B cell (primary cell): ENCODE measurements at regions of chr12 and their contacts with region 1.

Region 1: DNA sequence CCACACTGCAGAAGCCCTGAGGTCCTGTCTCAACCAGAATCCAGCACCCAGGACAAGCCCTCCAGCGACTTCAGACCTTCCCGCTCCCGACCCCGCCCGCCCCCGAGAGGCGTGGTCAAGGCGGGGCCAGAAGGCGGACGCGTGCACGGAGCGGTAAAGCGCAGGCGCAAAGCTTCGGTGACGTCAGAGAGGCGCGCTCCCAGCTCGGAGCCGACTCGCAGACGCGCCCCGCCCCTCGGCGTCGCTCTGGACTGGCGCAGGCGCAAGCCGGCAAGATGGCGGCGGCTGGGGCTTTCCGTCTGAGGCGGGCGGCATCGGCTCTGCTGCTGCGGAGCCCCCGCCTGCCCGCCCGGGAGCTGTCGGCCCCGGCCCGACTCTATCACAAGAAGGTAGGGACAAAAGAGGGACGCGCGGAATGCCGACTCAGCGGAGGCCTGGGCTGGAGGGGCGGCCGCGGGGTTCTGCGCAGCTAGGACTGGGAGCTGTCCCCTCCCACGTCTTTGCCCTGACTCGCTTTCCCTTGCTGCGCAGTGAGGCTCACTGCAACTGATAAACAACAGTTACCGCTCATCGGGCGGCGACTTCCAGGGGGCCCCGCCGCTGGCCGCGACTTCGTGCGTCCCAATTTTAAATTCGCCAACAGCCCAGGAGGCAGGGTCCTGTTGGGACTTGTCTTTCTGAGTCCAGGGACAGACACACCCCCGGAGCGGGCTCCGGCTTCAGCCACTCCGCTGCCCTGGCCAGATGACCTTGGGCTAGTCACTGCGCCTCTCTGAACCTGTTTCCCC is at the start of gene ISCU:
- DNase-seq: peak; percentile 99
- ATAC-seq: peak; percentile 73
- H3K4me3 ChIP-seq: peak within 1 kb of the TSS; percentile 84 to 99 (median 98)
- H3K4me3 Mint-ChIP-seq: peak within 1 kb of the TSS; percentile 100
- H3K27ac ChIP-seq: peak within 1 kb of the TSS; percentile 94 to 97
- H3K27ac Mint-ChIP-seq: peak within 1 kb of the TSS; percentile 100
- H3K4me1 ChIP-seq: peaks cover 53 to 61% of the 10 kb centered on the region in 2 donors
- H3K4me1 Mint-ChIP-seq: peaks cover 72% of the 10 kb centered on the region
- H3K27me3 ChIP-seq: no peaks in the 10 kb centered on the region
- H3K27me3 Mint-ChIP-seq: no peaks in the 10 kb centered on the region
- CTCF ChIP-seq: no peak
- total RNA-seq, gene ISCU: 190 and 209 TPM in 2 replicates

Region 2: DNA sequence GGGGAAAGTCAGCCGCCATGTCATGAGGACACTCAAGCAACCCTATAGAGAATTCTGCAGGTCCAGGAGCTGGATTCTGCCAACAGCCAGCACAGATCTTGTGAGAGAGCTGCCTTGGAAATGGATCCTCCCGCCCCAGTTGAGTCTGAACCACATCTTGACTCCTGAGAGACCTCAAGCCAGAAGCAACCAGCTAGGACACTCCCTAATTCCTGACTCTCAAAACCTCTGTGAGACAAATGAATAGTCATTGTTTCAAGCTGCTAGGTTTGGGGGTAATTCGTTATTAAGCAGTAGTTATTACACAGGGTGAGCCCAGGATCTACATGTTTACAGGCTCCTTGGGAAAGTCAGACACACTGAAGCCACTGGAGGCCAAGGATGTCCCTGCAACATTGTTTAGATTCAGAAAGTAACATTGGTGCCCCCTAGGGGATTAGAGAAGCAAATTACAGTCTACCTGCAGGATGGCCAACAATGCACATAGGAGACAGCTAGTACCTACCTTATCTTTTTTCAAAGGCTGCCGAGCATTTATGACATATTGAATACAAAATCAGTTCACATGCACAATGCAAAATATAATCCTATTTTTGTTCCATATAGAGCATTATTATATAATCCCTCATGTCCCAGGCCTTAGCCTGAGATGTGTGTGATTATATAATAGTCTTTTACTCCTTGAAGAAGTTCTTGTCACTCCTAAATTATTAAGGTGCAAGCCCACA is 105.4 kb before region 1 on chr12:
- CTCF ChIA-PET with region 1: no interaction called
- POLR2A ChIA-PET with region 1: no interaction called
- intact Hi-C with region 1: no loop called
- DNase-seq: peak; percentile 32
- ATAC-seq: no peak
- H3K4me3 ChIP-seq: no peak overlapping the region
- H3K4me3 Mint-ChIP-seq: no peak overlapping the region
- H3K27ac ChIP-seq: no peak overlapping the region
- H3K27ac Mint-ChIP-seq: no peak overlapping the region
- H3K4me1 ChIP-seq: no peaks in the 10 kb centered on the region
- H3K4me1 Mint-ChIP-seq: no peaks in the 10 kb centered on the region
- H3K27me3 ChIP-seq: peaks cover 0 to 20% (median 2%) of the 10 kb centered on the region in 4 experiments
- H3K27me3 Mint-ChIP-seq: peaks cover 40% of the 10 kb centered on the region
- CTCF ChIP-seq: peak; percentile 57

Region 3: GRCh38 chr12:108542320-108542719 is 20.2 kb before region 1 on chr12:
- CTCF ChIA-PET with region 1: no interaction called
- POLR2A ChIA-PET with region 1: no interaction called
- intact Hi-C with region 1: loop called (anchors 1 kb)
- DNase-seq: no peak
- ATAC-seq: no peak
- H3K4me3 ChIP-seq: no peak overlapping the region
- H3K4me3 Mint-ChIP-seq: peak overlapping the region; percentile 29
- H3K27ac ChIP-seq: peak overlapping the region in 1 of 2 donors; percentile 29
- H3K27ac Mint-ChIP-seq: peak overlapping the region; percentile 74
- H3K4me1 ChIP-seq: peaks cover 0 to 16% of the 10 kb centered on the region in 2 donors
- H3K4me1 Mint-ChIP-seq: peaks cover 19% of the 10 kb centered on the region
- H3K27me3 ChIP-seq: no peaks in the 10 kb centered on the region
- H3K27me3 Mint-ChIP-seq: no peaks in the 10 kb centered on the region
- CTCF ChIP-seq: no peak

Region 4: GRCh38 chr12:108633534-108634248 is 71.1 kb after region 1 on chr12 and contains the start of gene SELPLG:
- CTCF ChIA-PET with region 1: interaction called, 200 read pairs
- POLR2A ChIA-PET with region 1: interaction called, 51 read pairs
- intact Hi-C with region 1: loop called (anchors 1 kb)
- DNase-seq: peak; percentile 98
- ATAC-seq: peak; percentile 75
- H3K4me3 ChIP-seq: peak within 1 kb of the TSS; percentile 62 to 87 (median 78)
- H3K4me3 Mint-ChIP-seq: peak within 1 kb of the TSS; percentile 99
- H3K27ac ChIP-seq: peak within 1 kb of the TSS; percentile 92 to 95
- H3K27ac Mint-ChIP-seq: peak within 1 kb of the TSS; percentile 100
- H3K4me1 ChIP-seq: peaks cover 78 to 88% of the 10 kb centered on the region in 2 donors
- H3K4me1 Mint-ChIP-seq: peaks cover 89% of the 10 kb centered on the region
- H3K27me3 ChIP-seq: no peaks in the 10 kb centered on the region
- H3K27me3 Mint-ChIP-seq: no peaks in the 10 kb centered on the region
- CTCF ChIP-seq: peak; percentile 41
- total RNA-seq, gene SELPLG: 6.1 and 6.2 TPM in 2 replicates

Region 5: DNA sequence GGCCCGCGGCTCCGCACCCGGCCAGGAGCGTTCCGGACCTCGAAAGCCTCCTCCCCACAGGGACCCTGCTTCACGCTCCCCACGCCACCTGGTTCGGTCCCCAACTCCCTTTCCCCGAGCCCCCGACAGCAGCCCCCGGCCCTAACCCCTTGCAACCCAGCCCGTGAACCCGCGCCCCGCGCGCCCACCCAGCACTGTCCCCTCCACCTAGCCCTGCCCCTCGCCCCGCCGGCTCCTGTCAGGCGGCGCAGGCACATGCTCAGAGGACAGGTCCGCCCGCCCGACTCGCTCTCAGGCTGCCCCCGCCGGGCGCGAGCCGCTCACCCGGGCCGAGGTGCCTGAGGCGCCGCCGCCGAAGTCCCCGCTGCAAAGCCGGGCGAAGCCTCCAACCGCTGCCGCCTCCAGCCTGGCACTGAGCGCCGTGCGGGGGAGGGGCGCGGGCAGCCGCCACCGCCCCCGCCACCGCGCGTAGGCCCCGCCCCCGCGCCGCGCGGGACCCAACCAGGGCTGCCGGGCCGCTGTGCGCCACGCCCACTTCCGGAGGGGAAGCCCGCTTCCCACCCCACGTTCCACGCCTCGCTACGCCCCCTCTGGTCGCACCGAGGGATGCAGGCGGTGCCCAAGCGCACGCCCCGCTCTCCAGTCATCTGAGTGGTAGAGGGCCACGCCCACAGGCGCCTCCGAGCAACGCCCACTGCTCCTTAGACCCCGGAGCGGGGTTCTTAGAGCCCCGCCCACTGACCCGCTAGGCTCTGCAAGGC is 168.7 kb after region 1 on chr12 and contains the start of gene CORO1C:
- CTCF ChIA-PET with region 1: no interaction called
- POLR2A ChIA-PET with region 1: interaction called, 6 read pairs
- intact Hi-C with region 1: loop called (anchors 1 kb)
- DNase-seq: peak; percentile 97
- ATAC-seq: peak; percentile 73
- H3K4me3 ChIP-seq: peak within 1 kb of the TSS; percentile 70 to 92 (median 86)
- H3K4me3 Mint-ChIP-seq: peak within 1 kb of the TSS; percentile 99
- H3K27ac ChIP-seq: peak within 1 kb of the TSS; percentile 80 to 92
- H3K27ac Mint-ChIP-seq: peak within 1 kb of the TSS; percentile 98
- H3K4me1 ChIP-seq: peaks cover 11 to 16% of the 10 kb centered on the region in 2 donors
- H3K4me1 Mint-ChIP-seq: peaks cover 51% of the 10 kb centered on the region
- H3K27me3 ChIP-seq: no peaks in the 10 kb centered on the region
- H3K27me3 Mint-ChIP-seq: no peaks in the 10 kb centered on the region
- CTCF ChIP-seq: peak; percentile 83
- total RNA-seq, gene CORO1C: 58.9 and 68.0 TPM in 2 replicates

Region 6: DNA sequence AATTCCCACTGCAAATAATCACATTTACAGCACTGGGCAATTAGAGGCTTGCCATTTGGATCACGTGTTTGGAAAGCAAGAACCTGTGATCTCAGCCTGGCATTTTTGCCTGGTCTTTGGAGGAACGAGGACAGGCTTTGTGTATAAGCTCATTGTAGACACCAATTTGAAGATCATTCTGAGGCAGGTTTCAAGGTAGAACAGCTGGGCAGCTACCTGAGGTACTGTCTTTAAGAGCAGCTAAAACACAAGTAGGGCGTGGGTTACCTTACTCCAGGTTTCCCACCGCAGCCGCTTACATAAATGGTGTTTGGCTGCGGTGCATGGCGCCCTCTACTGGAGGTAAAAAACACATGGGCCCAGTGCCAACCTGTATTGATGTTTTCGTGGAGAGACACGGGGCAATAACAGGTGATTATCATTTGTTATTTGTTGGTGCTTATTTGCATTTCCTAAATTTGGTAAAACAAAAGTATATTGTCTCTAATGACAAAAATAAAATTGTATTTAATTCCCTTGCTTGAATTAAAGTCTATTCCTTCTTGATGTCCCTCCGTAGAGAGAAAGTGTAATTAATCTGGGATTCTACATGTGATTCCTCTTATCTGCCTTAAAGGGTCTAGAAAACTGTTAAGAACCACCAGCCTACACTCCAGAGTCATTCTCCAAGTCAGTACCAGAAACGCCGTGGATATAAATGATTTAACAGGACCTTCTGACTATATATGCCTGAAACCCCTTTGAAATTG is 388.6 kb after region 1 on chr12:
- CTCF ChIA-PET with region 1: interaction called, 8 read pairs
- POLR2A ChIA-PET with region 1: no interaction called
- intact Hi-C with region 1: loop called (anchors 1 kb)
- DNase-seq: peak; percentile 85
- ATAC-seq: peak; percentile 73
- H3K4me3 ChIP-seq: no peak overlapping the region
- H3K4me3 Mint-ChIP-seq: no peak overlapping the region
- H3K27ac ChIP-seq: no peak overlapping the region
- H3K27ac Mint-ChIP-seq: no peak overlapping the region
- H3K4me1 ChIP-seq: peaks cover 0 to 4% of the 10 kb centered on the region in 2 donors
- H3K4me1 Mint-ChIP-seq: peaks cover 6% of the 10 kb centered on the region
- H3K27me3 ChIP-seq: peaks cover 0 to 5% (median 0%) of the 10 kb centered on the region in 4 experiments
- H3K27me3 Mint-ChIP-seq: peaks cover 9% of the 10 kb centered on the region
- CTCF ChIP-seq: peak; percentile 99

Region 7: GRCh38 chr12:109713187-109713984 is 1150.8 kb after region 1 on chr12 and contains the start of gene FAM222A:
- CTCF ChIA-PET with region 1: no interaction called
- POLR2A ChIA-PET with region 1: no interaction called
- intact Hi-C with region 1: loop called (anchors 5 kb)
- DNase-seq: peak; percentile 99
- ATAC-seq: peak; percentile 84
- H3K4me3 ChIP-seq: peak within 1 kb of the TSS in 4 of 5 experiments; percentile 53 to 80 (median 64)
- H3K4me3 Mint-ChIP-seq: peak within 1 kb of the TSS; percentile 85
- H3K27ac ChIP-seq: peak within 1 kb of the TSS in 1 of 2 donors; percentile 52
- H3K27ac Mint-ChIP-seq: peak within 1 kb of the TSS; percentile 82
- H3K4me1 ChIP-seq: peaks cover 10 to 11% of the 10 kb centered on the region in 2 donors
- H3K4me1 Mint-ChIP-seq: peaks cover 11% of the 10 kb centered on the region
- H3K27me3 ChIP-seq: peaks cover 0 to 59% (median 23%) of the 10 kb centered on the region in 4 experiments
- H3K27me3 Mint-ChIP-seq: peaks cover 37% of the 10 kb centered on the region
- CTCF ChIP-seq: no peak
- total RNA-seq, gene FAM222A: 4.6 and 4.7 TPM in 2 replicates